ENCODE measurements at regions of chr11 and their contacts with region 1.

Region 1: GRCh38 chr11:78228467-78228866 is 39.7 kb downstream of the USP35 start:
- DNase-seq: peak in 2 of 6 donors; percentile 30 to 33
- ATAC-seq: peak; percentile 86 to 94 (median 93)
- H3K4me3 ChIP-seq: no peak overlapping the region
- H3K27ac ChIP-seq: no peak overlapping the region
- H3K4me1 ChIP-seq: no peaks in the 10 kb centered on the region
- H3K27me3 ChIP-seq: no peaks in the 10 kb centered on the region
- CTCF ChIP-seq: peak in 3 of 4 donors; percentile 17 to 32 (median 31)

Region 2: GRCh38 chr11:78420255-78420764 is 191.8 kb after region 1 on chr11:
- intact Hi-C with region 1: loop called in 1 of 3 experiments (anchors 10 kb)
- DNase-seq: peak in 5 of 6 donors; percentile 27 to 71 (median 38)
- ATAC-seq: peak in 1 of 4 donors; percentile 1
- H3K4me3 ChIP-seq: no peak overlapping the region
- H3K27ac ChIP-seq: peak overlapping the region in 1 of 4 donors; percentile 17
- H3K4me1 ChIP-seq: peaks cover 0 to 16% (median 8%) of the 10 kb centered on the region in 3 donors
- H3K27me3 ChIP-seq: no peaks in the 10 kb centered on the region
- CTCF ChIP-seq: peak; percentile 16 to 49 (median 32)

Region 3: GRCh38 chr11:78557236-78557635 is 328.8 kb after region 1 on chr11:
- intact Hi-C with region 1: loop called in 2 of 3 experiments (anchors 5 kb)
- DNase-seq: no peak
- ATAC-seq: no peak
- H3K4me3 ChIP-seq: no peak overlapping the region
- H3K27ac ChIP-seq: no peak overlapping the region
- H3K4me1 ChIP-seq: peaks cover 0 to 21% (median 9%) of the 10 kb centered on the region in 3 donors
- H3K27me3 ChIP-seq: no peaks in the 10 kb centered on the region
- CTCF ChIP-seq: no peak

Region 4: GRCh38 chr11:78564490-78565467 is 336.3 kb after region 1 on chr11:
- intact Hi-C with region 1: loop called in 2 of 3 experiments (anchors 5 kb)
- DNase-seq: peak in 3 of 6 donors; percentile 9 to 36 (median 36)
- ATAC-seq: peak; percentile 73 to 83 (median 80)
- H3K4me3 ChIP-seq: no peak overlapping the region
- H3K27ac ChIP-seq: no peak overlapping the region
- H3K4me1 ChIP-seq: peaks cover 0 to 21% (median 9%) of the 10 kb centered on the region in 3 donors
- H3K27me3 ChIP-seq: no peaks in the 10 kb centered on the region
- CTCF ChIP-seq: peak; percentile 36 to 78 (median 63)